ENCODE measurements at regions of chr12 and their contacts with region 1.

Region 1: GRCh38 chr12:76621582-76622024 is 62.0 kb upstream of the OSBPL8 start:
- DNase-seq: peak in 5 of 6 donors; percentile 65 to 79 (median 71)
- ATAC-seq: peak; percentile 93 to 100 (median 98)
- H3K4me3 ChIP-seq: no peak overlapping the region
- H3K27ac ChIP-seq: peak overlapping the region in 1 of 4 donors; percentile 7
- H3K4me1 ChIP-seq: peaks cover 0 to 9% (median 5%) of the 10 kb centered on the region in 3 donors
- H3K27me3 ChIP-seq: no peaks in the 10 kb centered on the region
- CTCF ChIP-seq: peak; percentile 73 to 98 (median 86)

Region 2: DNA sequence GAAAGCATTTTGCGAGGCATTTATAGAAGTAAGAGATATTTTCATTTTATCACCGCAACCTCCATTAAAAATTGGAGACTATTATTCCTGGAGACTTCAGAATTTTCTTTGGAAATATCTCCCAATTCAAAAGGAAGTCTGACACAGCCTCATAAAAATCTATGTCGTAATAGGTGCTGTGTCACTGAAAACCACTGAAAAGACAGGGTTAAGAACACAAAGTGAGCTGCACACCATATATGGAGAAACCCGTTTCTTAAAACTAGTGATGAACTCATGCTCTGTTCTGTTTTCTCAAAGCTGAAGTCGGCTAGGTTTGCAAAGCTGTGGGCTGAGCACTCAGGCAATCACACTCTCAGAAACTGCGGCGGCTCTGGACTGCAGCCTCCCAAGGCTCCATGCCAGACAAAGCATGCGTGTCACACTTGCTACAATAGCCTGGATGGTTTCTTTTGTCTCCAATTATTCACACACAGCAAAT is 1141.1 kb before region 1 on chr12 and contains the start of gene GLIPR1:
- intact Hi-C with region 1: no loop called
- DNase-seq: peak; percentile 14 to 60 (median 48)
- ATAC-seq: peak; percentile 78 to 87 (median 86)
- H3K4me3 ChIP-seq: peak within 1 kb of the TSS in 3 of 4 donors; percentile 5 to 46 (median 21)
- H3K27ac ChIP-seq: peak within 1 kb of the TSS in 2 of 4 donors; percentile 66 to 67
- H3K4me1 ChIP-seq: no peaks in the 10 kb centered on the region
- H3K27me3 ChIP-seq: no peaks in the 10 kb centered on the region
- CTCF ChIP-seq: no peak
- total RNA-seq, gene GLIPR1: 0.79 to 19.1 (median 3.8) TPM

Region 3: DNA sequence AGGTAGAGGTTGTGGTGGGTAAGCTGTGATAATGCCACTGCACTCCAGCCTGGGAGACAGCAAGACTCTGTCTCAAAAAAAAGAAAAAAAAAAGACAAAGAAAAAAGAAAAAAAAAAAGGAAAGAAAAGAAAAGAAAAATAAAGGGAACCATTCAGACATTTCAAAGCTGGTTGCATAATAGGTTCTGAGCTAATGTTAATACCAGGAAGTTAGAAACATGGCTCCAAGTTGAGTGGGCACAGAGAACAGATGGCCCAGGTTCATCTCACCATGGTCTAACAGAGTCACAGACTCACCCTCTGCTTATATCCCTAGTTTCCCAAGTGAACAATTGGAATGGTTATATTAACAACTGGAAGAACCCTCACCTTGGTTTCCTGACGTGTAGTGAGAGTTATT is 124.9 kb after region 1 on chr12:
- intact Hi-C with region 1: no loop called
- DNase-seq: no peak
- ATAC-seq: no peak
- H3K4me3 ChIP-seq: no peak overlapping the region
- H3K27ac ChIP-seq: no peak overlapping the region
- H3K4me1 ChIP-seq: no peaks in the 10 kb centered on the region
- H3K27me3 ChIP-seq: no peaks in the 10 kb centered on the region
- CTCF ChIP-seq: no peak

Region 4: DNA sequence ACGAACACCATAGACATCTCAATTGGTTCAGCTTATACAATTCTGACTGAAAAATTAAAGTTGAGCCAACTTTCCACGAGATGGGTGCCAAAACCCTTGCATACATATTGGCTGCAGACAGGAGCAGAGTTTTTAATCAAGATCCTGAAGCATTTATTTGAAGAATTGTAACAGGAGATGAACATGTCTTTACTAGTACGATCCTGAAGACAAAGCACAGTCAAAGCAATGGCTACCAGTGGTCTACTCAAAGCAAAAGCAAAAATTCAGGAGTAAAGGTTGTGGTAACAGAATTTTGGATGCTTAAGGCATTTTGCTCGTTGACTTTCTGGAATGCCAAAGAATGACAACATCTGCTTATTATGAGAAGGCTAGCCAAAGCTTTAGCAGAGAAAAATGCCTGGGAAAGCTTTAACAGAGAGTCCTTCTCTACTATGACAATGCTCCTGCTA is 163.0 kb after region 1 on chr12:
- intact Hi-C with region 1: loop called in 1 of 3 experiments (anchors 5 kb)
- DNase-seq: no peak
- ATAC-seq: peak in 2 of 4 donors; percentile 43 to 45
- H3K4me3 ChIP-seq: no peak overlapping the region
- H3K27ac ChIP-seq: no peak overlapping the region
- H3K4me1 ChIP-seq: peaks cover 9 to 15% (median 13%) of the 10 kb centered on the region in 3 donors
- H3K27me3 ChIP-seq: no peaks in the 10 kb centered on the region
- CTCF ChIP-seq: no peak

Region 5: DNA sequence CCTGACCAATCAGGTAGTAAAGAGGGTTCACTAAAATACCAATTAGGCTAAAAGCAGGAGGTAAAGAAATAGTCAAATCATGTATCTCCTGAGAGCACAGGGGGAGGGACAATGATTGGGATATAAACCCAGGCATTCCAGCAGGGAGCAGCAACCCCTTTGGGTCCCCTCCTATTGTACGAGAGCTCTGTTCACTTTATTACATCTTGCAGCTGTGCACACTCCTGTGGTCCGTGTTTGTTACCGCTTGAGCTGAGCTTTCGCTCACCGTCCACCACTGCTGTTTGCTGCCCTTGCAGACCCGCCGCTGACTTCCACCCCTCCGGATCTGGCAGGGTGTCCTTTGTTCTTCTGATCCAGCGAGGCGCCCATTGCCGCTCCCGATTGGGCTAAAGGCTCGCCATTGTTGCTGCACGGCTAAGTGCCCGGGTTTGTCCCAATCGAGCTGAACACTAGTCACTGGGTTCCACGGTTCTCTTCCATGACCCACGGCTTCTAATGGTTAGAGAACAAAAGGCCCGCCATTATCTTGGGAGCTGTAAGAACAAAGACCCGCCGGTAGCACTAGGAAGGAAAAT is 379.7 kb after region 1 on chr12:
- intact Hi-C with region 1: loop called in 2 of 3 experiments (anchors 5 to 10 kb)
- DNase-seq: no peak
- ATAC-seq: no peak
- H3K4me3 ChIP-seq: no peak overlapping the region
- H3K27ac ChIP-seq: no peak overlapping the region
- H3K4me1 ChIP-seq: no peaks in the 10 kb centered on the region
- H3K27me3 ChIP-seq: no peaks in the 10 kb centered on the region
- CTCF ChIP-seq: no peak

Region 6: DNA sequence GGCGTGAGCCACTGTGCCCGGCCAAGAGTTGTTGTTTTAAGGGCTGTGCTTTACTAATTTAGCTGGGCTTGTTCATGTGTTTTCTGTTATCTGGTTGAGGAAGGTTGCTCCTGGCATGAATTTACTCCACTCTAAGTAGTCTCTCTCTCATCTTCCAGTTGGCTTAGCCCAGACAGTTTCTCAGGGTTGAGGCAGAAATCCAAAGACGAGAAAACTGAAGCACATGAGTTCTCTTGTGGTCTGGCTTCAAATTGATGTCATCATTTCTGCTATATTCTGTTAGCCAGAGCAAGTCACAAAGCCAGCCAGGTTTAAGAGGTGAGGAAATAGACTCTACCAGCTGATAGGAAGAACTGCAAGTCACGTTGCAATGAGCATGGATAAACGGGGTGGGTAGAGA is 385.9 kb after region 1 on chr12:
- intact Hi-C with region 1: loop called in 2 of 3 experiments (anchors 5 to 10 kb)
- DNase-seq: no peak
- ATAC-seq: no peak
- H3K4me3 ChIP-seq: no peak overlapping the region
- H3K27ac ChIP-seq: no peak overlapping the region
- H3K4me1 ChIP-seq: no peaks in the 10 kb centered on the region
- H3K27me3 ChIP-seq: no peaks in the 10 kb centered on the region
- CTCF ChIP-seq: no peak

Measured in pancreas (tissue), 10 donors.